GM10248 (cell line): ENCODE measurements at regions of chr11 and their contacts with region 1.

Region 1: GRCh38 chr11:3037040-3037944 is 19.9 kb downstream of the CARS1 start:
- DNase-seq: peak; percentile 59
- CTCF ChIP-seq: peak; percentile 64

Region 2: DNA sequence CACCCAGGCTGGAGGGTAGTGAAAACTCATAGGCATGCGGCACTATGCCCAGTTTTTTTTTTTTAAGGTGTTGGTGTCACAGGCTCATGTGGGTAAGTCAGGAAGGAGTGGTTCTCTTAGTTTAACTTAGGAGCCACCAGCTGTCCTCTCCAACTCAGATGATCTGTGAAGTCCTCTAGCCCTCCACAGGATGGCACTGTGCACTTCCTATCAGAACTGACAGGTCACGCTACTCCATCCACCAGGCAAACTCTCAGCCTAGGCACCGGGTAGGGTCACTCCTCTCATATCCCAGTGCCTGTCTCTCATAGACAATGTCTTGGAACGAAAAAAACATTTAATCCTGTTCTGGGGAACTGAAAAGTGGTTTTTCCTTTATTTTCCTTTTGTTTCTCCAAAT is 61.7 kb before region 1 on chr11:
- CTCF ChIA-PET with region 1: interaction called, 14 read pairs
- POLR2A ChIA-PET with region 1: no interaction called
- DNase-seq: peak; percentile 39
- CTCF ChIP-seq: peak; percentile 57

Region 3: DNA sequence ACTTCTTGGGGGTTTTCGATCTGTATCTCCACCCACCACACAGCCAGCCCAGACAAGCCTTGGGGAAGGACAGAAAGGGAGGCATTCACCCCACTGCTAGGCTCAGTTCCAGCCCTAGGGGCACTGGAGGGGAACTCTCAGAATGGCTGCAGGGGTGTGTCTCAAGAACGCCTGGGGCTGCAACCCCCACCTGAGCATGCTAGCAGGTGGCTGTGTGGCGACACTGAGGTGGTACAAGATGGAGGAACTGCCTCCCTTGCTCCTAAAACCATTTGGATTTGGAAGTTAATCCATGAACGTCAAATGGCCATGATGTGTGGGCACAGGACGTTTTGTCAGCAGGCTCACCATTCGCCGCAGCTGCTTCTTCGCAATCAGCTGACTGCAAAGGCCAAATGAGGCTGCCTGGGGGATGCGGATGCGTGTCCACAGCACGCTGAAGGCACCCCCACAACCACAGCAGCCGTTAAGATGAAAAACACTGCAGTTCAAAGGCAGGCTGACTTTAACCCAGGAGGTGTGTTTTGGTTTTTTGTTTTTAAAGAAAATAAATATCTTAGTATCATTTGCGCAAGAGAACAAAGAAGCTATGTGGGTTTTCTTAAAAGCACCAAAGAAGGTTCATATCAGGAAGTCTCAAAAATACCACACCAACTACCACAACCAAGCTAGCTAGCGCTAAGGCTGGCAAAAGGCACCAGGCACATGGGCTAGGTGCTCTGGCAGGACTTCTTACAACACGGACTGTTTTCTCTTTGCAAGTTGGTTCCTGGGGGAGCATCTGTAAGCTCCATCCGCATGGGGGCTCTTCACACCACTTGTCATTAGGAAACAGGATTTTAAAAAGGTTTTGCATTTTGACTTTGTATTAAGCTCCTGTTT is 23.0 kb before region 1 on chr11:
- CTCF ChIA-PET with region 1: interaction called, 24 read pairs
- POLR2A ChIA-PET with region 1: no interaction called
- DNase-seq: peak; percentile 39
- CTCF ChIP-seq: no peak

Region 4: DNA sequence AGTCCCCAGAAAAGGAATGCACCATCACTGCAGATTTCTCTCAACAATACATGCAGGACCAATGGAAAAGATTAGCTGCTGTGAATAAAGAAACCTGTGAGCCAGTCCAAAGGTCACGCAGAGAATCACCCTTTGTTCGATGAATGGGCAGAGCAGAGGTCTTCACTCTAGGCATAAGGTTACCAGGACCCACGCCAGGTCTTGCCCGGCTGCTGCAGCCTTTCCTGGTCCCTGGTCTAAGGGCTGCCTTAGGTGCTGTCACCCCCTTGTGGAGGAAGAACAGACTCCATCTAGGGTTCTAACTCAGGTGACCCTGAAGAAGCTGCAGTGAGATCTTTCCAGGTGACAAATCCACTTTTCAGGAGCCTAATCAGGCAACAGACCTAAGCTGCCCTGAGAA is 16.2 kb before region 1 on chr11:
- CTCF ChIA-PET with region 1: interaction called, 28 read pairs
- POLR2A ChIA-PET with region 1: no interaction called
- DNase-seq: peak; percentile 61
- CTCF ChIP-seq: peak; percentile 9

Region 5: DNA sequence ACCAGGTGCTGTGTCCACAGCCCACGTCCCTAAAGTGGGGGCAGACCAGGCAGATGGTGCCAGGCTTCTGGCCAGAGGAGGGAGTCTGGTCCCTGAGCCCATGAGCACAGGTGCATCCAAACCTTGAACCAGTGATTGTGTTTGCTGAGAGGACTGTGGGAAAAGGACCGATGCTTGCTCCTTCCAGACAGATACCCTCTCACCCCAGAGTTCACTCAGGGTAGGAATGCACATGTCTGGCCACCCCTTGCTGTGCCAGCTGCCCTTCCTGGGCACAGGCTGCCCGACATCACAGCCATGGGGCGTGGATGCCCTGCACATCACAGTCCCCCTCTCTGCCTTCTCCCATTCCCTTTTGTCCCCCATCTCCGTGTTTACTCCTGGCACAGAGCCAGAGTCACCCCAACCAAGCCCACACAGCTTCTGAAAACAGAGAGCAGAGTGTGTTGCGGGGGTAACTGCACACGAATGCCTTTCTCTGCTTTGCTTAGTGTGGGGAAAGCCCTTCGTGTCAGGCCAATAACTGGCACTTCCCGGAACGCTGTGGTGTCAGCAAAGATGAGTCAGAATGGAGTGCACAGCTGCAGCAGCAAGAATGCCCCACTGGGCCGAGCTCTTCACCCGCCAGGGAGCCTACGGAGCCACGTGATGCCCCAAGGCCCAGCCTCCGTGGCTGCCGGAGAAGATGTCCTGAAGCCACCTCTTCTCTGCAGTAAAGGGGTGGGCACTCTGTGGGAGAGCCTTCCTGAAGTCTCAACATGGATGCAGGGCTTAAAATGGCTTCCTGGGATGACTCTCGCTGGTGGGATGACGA is 12.3 kb after region 1 on chr11:
- CTCF ChIA-PET with region 1: interaction called, 51 read pairs
- POLR2A ChIA-PET with region 1: no interaction called
- DNase-seq: peak; percentile 86
- CTCF ChIP-seq: peak; percentile 8